ENCODE measurements at regions of chr5 and their contacts with region 1.

Region 1: GRCh38 chr5:181260387-181261319 is at the start of gene TRIM52:
- DNase-seq: peak; percentile 87
- H3K4me3 Mint-ChIP-seq: peak within 1 kb of the TSS; percentile 99
- H3K27ac Mint-ChIP-seq: peak within 1 kb of the TSS; percentile 96
- H3K4me1 Mint-ChIP-seq: peaks cover 45% of the 10 kb centered on the region
- H3K27me3 Mint-ChIP-seq: no peaks in the 10 kb centered on the region
- total RNA-seq, gene TRIM52: 15.3 and 17.1 TPM in 2 replicates

Region 2: DNA sequence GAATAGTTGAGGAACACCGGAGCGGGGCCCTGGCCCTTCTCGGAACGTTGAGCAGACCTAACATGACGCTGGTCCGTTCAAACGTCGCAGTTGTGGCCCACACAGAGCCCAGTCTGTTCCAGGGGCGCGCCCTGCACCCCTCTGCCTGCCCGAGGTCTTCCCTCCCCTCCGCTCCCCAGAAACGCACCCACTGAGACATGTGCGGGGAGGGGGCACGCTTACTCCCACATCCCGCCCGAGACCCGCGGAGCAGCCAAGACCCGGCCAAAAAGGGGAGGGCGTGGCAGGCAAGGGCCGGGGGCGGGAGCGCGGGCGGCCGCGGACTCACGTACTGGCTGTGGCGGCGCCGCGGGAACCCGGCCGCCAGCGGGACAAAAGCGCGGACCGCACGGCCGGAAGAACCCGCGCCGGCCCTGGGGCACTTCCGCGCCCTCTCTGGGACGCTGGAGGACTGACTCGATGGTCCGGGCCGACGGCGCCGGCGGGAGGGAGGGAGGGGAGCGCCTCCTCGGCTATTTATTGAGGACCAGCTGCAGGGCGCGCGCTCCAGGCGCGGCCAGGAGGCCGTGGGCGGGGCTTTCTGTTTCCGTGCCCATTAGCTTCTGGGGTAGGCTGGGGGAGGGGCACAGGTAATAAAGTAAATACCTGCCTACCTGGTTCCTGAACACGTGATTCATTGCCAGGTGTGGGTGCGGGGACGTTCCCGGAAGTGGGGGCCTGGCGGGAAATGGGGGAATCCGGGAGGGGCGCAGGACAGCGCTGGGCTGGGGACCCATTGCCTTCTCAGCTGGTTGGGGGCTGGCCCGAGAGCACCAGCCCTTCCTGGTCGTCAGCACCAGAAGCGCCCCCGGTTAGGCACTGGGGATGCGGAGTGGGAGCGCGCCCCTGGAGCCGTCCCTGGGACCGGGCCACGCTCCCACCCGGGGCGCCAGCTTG is 399.5 kb before region 1 on chr5 and contains the start of gene ZFP62:
- intact Hi-C with region 1: loop called (anchors 5 kb)
- DNase-seq: peak; percentile 82
- H3K4me3 Mint-ChIP-seq: peak within 1 kb of the TSS; percentile 90
- H3K27ac Mint-ChIP-seq: peak within 1 kb of the TSS; percentile 91
- H3K4me1 Mint-ChIP-seq: peaks cover 18% of the 10 kb centered on the region
- H3K27me3 Mint-ChIP-seq: peaks cover 4% of the 10 kb centered on the region
- total RNA-seq, gene ZFP62: 28.4 and 28.5 TPM in 2 replicates

Region 3: DNA sequence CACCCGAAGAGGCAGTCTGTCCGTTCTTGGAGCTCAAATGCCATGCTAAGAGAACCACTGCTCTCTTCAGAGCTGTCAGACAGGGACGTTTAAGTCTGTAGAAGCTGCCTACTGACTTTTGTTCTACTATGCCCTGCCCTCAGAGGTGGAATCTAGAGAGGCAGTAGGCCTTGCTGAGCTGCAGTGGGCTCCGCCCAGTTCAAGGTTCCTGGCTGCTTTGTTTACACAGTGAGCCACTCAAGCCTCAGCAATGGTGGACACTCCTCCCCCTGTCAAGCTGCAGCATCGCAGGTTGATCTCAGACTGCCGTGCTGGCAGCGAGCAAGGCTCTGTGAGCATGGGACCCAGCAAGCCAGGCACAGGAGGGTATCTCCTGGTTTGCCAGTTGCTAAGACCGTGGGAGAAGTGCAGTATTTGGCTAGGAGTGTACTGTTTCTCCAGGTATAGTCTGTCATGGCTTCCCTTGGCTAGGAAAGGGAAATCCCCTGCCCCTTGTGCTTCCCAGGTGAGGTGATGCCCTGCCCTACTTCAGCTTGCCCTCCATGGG is 374.7 kb before region 1 on chr5:
- intact Hi-C with region 1: no loop called
- DNase-seq: no peak
- H3K4me3 Mint-ChIP-seq: no peak overlapping the region
- H3K27ac Mint-ChIP-seq: no peak overlapping the region
- H3K4me1 Mint-ChIP-seq: no peaks in the 10 kb centered on the region
- H3K27me3 Mint-ChIP-seq: peaks cover 4% of the 10 kb centered on the region

Region 4: DNA sequence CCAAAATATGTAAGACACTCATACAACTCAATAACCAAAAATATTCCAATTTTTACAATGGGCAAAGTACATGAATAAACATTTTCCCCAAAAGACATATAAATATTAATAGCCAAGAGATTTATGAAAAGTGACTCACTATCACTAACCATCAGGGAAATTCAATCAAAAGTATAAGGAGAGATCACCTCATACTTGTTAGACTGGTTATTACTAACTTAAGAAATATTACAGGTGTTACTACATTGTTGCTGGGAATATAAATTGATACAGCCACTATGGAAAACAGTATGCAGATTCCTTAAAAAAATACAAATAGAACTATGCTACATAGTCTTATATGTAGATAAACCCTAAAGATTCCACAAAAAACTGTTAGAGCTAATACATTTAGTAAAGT is 339.9 kb before region 1 on chr5:
- intact Hi-C with region 1: no loop called
- DNase-seq: no peak
- H3K4me3 Mint-ChIP-seq: no peak overlapping the region
- H3K27ac Mint-ChIP-seq: no peak overlapping the region
- H3K4me1 Mint-ChIP-seq: no peaks in the 10 kb centered on the region
- H3K27me3 Mint-ChIP-seq: peaks cover 4% of the 10 kb centered on the region

Region 5: DNA sequence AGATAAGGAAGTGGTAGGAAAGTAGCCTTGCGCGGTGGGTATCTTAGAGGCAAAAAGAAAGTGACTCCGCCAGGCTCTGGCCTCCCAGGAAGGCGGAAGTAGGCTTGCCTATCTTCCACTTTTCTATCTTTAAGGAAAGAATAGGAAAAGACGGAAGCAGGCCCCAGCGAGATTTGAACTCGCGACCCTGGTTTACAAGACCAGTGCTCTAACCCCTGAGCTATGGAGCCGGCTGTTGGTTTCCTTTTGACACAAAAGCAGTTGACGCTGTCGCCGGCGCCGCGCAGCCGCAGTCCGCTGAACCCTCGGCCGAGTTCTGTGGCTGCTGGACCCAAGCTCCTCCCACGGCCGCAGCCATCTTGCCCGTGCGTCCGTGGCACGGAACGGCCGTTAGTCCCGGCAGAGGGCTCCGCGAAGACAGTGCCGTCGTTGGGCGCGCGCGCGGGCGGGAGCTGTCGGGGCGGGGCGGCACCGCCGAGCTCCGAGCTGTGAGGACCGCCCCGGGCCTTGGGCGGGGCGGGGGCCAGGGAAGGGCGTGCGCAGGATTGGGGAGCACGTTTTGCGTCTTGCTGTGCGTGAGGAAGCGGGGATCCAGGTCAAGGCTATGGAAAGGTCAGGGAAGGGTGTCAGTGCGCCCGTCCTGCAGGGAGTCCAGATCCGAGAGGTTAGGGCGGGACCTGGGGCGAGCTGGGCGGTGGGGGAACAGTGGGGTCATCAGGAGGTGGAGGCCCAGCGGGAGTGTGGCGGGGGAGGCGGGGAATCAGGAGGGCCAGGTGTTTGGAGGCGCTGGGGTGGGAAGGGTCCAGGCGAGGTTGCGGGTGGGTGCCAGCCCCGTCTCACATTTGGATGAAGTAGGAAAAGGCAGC is 68.9 kb before region 1 on chr5:
- intact Hi-C with region 1: loop called (anchors 1 kb)
- DNase-seq: peak; percentile 94
- H3K4me3 Mint-ChIP-seq: peak overlapping the region; percentile 94
- H3K27ac Mint-ChIP-seq: peak overlapping the region; percentile 96
- H3K4me1 Mint-ChIP-seq: peaks cover 43% of the 10 kb centered on the region
- H3K27me3 Mint-ChIP-seq: peaks cover 8% of the 10 kb centered on the region

Region 6: DNA sequence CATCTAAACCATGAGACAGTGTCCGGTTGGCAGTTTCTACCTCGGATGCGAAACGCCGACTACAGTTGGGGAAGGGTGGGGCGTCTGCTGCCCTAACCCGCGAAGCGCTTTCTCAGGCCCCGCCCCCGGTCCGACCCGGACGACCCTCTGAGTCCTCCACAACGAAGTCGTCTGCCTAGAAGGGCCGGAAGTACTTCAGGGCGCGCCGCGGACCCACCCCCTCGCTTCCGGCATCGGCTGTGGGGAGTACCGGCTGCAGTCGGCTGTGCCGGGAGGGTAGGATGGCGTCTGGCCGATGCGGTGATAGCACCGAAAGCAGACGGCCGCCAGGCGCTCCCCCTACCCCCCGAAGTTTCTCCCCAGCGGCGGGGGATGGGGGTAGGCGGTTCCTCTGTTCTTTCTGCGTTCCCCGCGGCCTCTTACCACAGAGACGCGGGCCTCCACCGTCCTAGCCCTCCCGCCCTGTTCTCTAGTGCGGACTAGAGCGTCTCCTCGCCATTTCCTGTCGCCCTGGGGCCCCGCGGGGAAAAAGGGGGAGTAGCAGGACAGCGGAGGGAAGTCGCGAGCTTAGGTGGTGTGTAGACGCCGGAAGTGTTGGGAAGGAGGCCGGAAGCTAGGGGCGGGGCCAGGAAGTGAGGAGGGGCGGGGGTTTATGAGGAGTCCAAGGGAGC is 37.5 kb before region 1 on chr5 and contains the start of gene TRIM41:
- intact Hi-C with region 1: loop called (anchors 1 kb)
- DNase-seq: peak; percentile 97
- H3K4me3 Mint-ChIP-seq: peak within 1 kb of the TSS; percentile 95
- H3K27ac Mint-ChIP-seq: peak within 1 kb of the TSS; percentile 98
- H3K4me1 Mint-ChIP-seq: peaks cover 64% of the 10 kb centered on the region
- H3K27me3 Mint-ChIP-seq: peaks cover 9% of the 10 kb centered on the region
- total RNA-seq, gene TRIM41: 31.8 and 34.8 TPM in 2 replicates

Measured in activated T-helper 1 cell treated with anti-CD3 and anti-CD28 coated beads, Interleukin-12 subunit alpha, Interleukin-12 subunit beta, Interleukin-2, Interleukin-4 antibody, amounts not matched to agents 30 ng/mL and 10 ng/mL and 1 ng/mL, durations not matched to agents 14 hours and 24 hours and 36 hours (primary cell).